ENCODE measurements at regions of chr7 and their contacts with region 1.

Region 1: GRCh38 chr7:5646852-5647251 is 134.6 kb downstream of the RNF216 start:
- DNase-seq: no peak
- ATAC-seq: no peak
- H3K4me3 ChIP-seq: no peak overlapping the region
- H3K4me3 Mint-ChIP-seq: no peak overlapping the region
- H3K27ac ChIP-seq: no peak overlapping the region
- H3K27ac Mint-ChIP-seq: no peak overlapping the region
- H3K4me1 ChIP-seq: no peaks in the 10 kb centered on the region
- H3K4me1 Mint-ChIP-seq: no peaks in the 10 kb centered on the region
- H3K27me3 ChIP-seq: no peaks in the 10 kb centered on the region
- H3K27me3 Mint-ChIP-seq: no peaks in the 10 kb centered on the region
- CTCF ChIP-seq: no peak

Region 2: GRCh38 chr7:5549096-5549763 is 97.6 kb before region 1 on chr7:
- CTCF ChIA-PET with region 1: no interaction called
- POLR2A ChIA-PET with region 1: interaction called, 10 read pairs
- intact Hi-C with region 1: no loop called
- DNase-seq: no peak
- ATAC-seq: no peak
- H3K4me3 ChIP-seq: no peak overlapping the region
- H3K4me3 Mint-ChIP-seq: no peak overlapping the region
- H3K27ac ChIP-seq: no peak overlapping the region
- H3K27ac Mint-ChIP-seq: no peak overlapping the region
- H3K4me1 ChIP-seq: peaks cover 5 to 7% of the 10 kb centered on the region in 2 donors
- H3K4me1 Mint-ChIP-seq: peaks cover 7% of the 10 kb centered on the region
- H3K27me3 ChIP-seq: peaks cover 0 to 7% (median 0%) of the 10 kb centered on the region in 4 experiments
- H3K27me3 Mint-ChIP-seq: no peaks in the 10 kb centered on the region
- CTCF ChIP-seq: no peak